Left cardiac atrium (tissue), 4 donors: ENCODE measurements at regions of chr15 and their contacts with region 1.

Region 1: DNA sequence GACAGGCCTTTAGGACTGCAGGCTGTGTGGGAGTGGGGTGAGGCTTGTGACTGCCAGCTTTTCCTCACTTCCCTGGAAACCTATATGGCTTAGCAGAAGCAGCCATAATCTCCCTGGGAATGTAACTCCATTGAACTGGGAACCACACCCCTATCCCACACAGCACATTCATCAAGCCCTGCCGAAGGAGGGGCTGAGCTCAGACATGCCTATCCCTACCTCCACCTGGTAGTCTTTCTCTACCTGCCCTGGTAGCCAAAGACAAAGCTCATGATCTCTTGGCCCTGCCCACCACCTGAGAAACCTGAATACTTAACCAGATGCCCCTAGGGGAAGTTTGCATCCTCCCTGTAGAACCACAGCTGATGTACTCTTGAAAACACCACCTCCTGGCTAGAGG is 219.8 kb downstream of the UNC13C start:
- DNase-seq: no peak
- ATAC-seq: no peak

Region 2: GRCh38 chr15:54254052-54254451 is 56.1 kb after region 1 on chr15:
- intact Hi-C with region 1: loop called in 1 of 2 experiments (anchors 2 kb)
- DNase-seq: no peak
- ATAC-seq: no peak

Region 3: DNA sequence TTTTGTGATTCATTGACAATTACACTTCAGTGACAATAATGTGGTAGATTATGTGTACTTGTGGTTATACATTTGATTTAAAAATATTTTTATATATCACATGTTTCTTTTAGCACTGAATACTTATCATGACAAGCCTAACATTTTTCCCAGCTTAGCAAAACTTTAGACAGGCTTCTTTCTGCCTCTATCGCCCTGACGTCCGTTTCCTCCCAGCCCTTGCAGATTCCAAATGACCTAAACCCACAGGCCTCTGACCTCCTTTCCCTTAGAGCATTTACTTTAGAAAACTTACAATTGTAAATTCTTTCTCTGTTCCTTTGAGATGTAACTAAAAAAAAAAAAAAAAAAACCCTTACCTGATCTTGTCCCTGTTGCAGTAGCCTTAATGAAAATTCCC is 106.3 kb after region 1 on chr15:
- intact Hi-C with region 1: no loop called
- DNase-seq: peak; percentile 20
- ATAC-seq: no peak